Activated B cell treated with CpG ODN at 0.5 μM for 24 hours (primary cell): ENCODE measurements at regions of chr20 and their contacts with region 1.

Region 1: GRCh38 chr20:266596-267562 is 9.4 kb downstream of the DEFB132 start:
- DNase-seq: peak; percentile 86
- ATAC-seq: peak; percentile 99
- H3K4me3 Mint-ChIP-seq: peak overlapping the region; percentile 81
- H3K27ac Mint-ChIP-seq: no peak overlapping the region
- H3K4me1 Mint-ChIP-seq: peaks cover 9% of the 10 kb centered on the region
- H3K27me3 Mint-ChIP-seq: peaks cover 2% of the 10 kb centered on the region
- CTCF ChIP-seq: peak; percentile 50

Region 2: GRCh38 chr20:208942-209566 is 57.8 kb before region 1 on chr20:
- CTCF ChIA-PET with region 1: interaction called, 18 read pairs
- POLR2A ChIA-PET with region 1: no interaction called
- intact Hi-C with region 1: loop called (anchors 1 kb)
- DNase-seq: no peak
- ATAC-seq: peak; percentile 70
- H3K4me3 Mint-ChIP-seq: no peak overlapping the region
- H3K27ac Mint-ChIP-seq: no peak overlapping the region
- H3K4me1 Mint-ChIP-seq: no peaks in the 10 kb centered on the region
- H3K27me3 Mint-ChIP-seq: peaks cover 3% of the 10 kb centered on the region
- CTCF ChIP-seq: no peak

Region 3: GRCh38 chr20:290084-290831 is 23.4 kb after region 1 on chr20 and contains the start of gene C20orf96:
- CTCF ChIA-PET with region 1: no interaction called
- POLR2A ChIA-PET with region 1: no interaction called
- intact Hi-C with region 1: loop called (anchors 1 kb)
- DNase-seq: peak; percentile 85
- ATAC-seq: peak; percentile 97
- H3K4me3 Mint-ChIP-seq: no peak within 1 kb of the TSS
- H3K27ac Mint-ChIP-seq: no peak within 1 kb of the TSS
- H3K4me1 Mint-ChIP-seq: peaks cover 6% of the 10 kb centered on the region
- H3K27me3 Mint-ChIP-seq: no peaks in the 10 kb centered on the region
- CTCF ChIP-seq: no peak
- total RNA-seq, gene C20orf96: 5.3 and 5.5 TPM in 2 replicates

Region 4: GRCh38 chr20:309841-310644 is 43.2 kb after region 1 on chr20:
- CTCF ChIA-PET with region 1: no interaction called
- POLR2A ChIA-PET with region 1: no interaction called
- intact Hi-C with region 1: loop called (anchors 1 kb)
- DNase-seq: peak; percentile 77
- ATAC-seq: peak; percentile 100
- H3K4me3 Mint-ChIP-seq: peak overlapping the region; percentile 86
- H3K27ac Mint-ChIP-seq: peak overlapping the region; percentile 86
- H3K4me1 Mint-ChIP-seq: peaks cover 18% of the 10 kb centered on the region
- H3K27me3 Mint-ChIP-seq: no peaks in the 10 kb centered on the region
- CTCF ChIP-seq: no peak

Region 5: GRCh38 chr20:330233-331149 is 63.6 kb after region 1 on chr20:
- CTCF ChIA-PET with region 1: interaction called, 24 read pairs
- POLR2A ChIA-PET with region 1: no interaction called
- intact Hi-C with region 1: loop called (anchors 1 kb)
- DNase-seq: peak; percentile 34
- ATAC-seq: peak; percentile 51
- H3K4me3 Mint-ChIP-seq: peak overlapping the region; percentile 19
- H3K27ac Mint-ChIP-seq: peak overlapping the region; percentile 61
- H3K4me1 Mint-ChIP-seq: peaks cover 33% of the 10 kb centered on the region
- H3K27me3 Mint-ChIP-seq: no peaks in the 10 kb centered on the region
- CTCF ChIP-seq: peak; percentile 15

Region 6: GRCh38 chr20:354298-355064 is 87.6 kb after region 1 on chr20:
- CTCF ChIA-PET with region 1: no interaction called
- POLR2A ChIA-PET with region 1: no interaction called
- intact Hi-C with region 1: no loop called
- DNase-seq: peak; percentile 70
- ATAC-seq: peak; percentile 100
- H3K4me3 Mint-ChIP-seq: no peak overlapping the region
- H3K27ac Mint-ChIP-seq: no peak overlapping the region
- H3K4me1 Mint-ChIP-seq: peaks cover 11% of the 10 kb centered on the region
- H3K27me3 Mint-ChIP-seq: no peaks in the 10 kb centered on the region
- CTCF ChIP-seq: no peak

Region 7: DNA sequence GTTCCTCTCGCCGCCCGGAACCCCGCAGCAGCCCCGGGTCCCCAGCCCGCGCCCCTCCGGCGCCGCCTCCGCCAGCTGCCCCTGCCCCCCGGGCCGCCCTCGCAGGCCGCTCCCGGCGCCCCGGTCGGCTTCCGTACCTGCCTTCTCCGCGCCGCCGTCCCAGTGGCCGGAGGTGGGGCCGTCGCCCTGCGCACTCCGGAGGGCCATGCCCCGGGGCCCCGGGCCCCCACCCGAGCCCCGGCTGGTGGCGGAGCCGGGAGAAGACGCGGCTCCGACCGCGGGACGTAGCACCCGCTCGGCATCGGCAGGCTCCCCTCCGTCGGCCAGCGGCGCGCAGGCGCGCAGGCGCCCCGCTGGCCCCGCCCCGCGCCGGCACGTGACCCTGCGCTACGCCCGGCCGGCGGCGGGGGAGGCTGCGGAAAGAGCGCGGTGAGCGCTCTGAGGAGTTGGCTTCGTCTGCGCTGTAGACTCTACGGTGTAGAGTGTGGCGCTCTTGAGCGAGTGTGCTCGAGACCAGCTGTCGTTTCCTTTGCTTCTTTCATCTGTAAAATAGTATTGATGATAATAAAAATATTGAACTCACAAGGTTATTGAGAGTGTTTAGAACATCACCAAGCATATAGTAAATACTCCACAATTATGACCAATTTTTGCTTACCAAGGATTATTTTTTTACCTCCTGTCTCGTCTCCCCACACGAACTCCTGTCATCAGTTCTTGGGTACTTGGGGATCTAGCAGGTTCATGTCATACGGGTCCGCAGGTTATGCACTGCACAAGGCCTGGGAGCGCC is 195.5 kb after region 1 on chr20 and contains the start of gene TBC1D20:
- CTCF ChIA-PET with region 1: no interaction called
- POLR2A ChIA-PET with region 1: no interaction called
- intact Hi-C with region 1: no loop called
- DNase-seq: peak; percentile 91
- ATAC-seq: peak; percentile 96
- H3K4me3 Mint-ChIP-seq: peak within 1 kb of the TSS; percentile 93
- H3K27ac Mint-ChIP-seq: peak within 1 kb of the TSS; percentile 89
- H3K4me1 Mint-ChIP-seq: peaks cover 24% of the 10 kb centered on the region
- H3K27me3 Mint-ChIP-seq: peaks cover 2% of the 10 kb centered on the region
- CTCF ChIP-seq: no peak
- total RNA-seq, gene TBC1D20: 21.4 and 24.1 TPM in 2 replicates